ENCODE measurements at regions of chr1 and their contacts with region 1.

Region 1: DNA sequence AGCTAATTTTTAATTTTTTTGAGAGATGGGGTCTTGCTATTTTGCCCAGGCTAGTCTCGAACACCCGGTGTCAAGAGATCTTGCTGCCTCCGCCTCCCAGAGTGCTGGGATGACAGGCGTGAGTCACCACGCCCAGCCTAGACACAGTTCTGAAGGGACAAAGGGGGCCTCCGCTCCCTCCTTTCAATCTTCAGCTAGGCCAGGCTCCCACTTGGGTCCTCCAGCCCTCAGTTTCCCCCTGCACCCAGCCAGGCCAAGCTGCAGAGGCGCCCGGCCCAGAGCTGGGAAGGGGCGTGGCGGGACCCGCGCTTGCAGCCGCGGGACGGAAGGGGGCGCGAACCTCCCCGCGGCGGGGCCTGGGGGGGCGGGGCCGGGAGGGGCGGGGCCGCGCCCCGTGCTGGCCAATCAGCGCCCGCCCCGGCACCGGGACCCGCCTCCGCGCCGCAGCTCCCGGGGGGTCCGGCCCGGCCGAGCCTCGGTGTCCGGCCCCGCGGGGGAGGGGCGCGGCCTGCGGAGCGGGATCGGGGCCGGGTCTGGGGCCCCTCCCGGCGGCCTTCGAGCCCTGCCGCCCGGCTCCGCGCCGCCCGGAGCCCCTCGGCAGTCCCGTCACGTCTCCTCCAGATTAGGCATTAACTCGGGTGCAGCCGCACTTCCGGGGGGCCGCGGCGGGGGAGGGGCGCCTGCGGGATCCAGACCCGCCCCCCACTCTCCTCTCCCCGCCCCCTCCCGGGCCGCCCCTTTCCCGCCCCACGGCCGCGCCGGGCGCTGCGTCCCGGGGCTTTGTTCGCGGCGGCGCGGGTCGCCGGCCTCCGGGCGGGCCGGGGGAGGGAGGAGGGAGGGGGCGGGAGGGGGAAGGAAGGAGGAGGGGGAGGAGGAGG is 559 bp upstream of the AGRN start:
- DNase-seq: peak; percentile 90 to 93
- H3K4me3 ChIP-seq: peak overlapping the region; percentile 16
- H3K4me3 Mint-ChIP-seq: no peak overlapping the region
- H3K27ac Mint-ChIP-seq: no peak overlapping the region
- H3K4me1 ChIP-seq: peaks cover 35% of the 10 kb centered on the region
- H3K4me1 Mint-ChIP-seq: peaks cover 13% of the 10 kb centered on the region
- H3K27me3 ChIP-seq: no peaks in the 10 kb centered on the region
- H3K27me3 Mint-ChIP-seq: no peaks in the 10 kb centered on the region
- CTCF ChIP-seq: peak; percentile 14 to 32

Region 2: DNA sequence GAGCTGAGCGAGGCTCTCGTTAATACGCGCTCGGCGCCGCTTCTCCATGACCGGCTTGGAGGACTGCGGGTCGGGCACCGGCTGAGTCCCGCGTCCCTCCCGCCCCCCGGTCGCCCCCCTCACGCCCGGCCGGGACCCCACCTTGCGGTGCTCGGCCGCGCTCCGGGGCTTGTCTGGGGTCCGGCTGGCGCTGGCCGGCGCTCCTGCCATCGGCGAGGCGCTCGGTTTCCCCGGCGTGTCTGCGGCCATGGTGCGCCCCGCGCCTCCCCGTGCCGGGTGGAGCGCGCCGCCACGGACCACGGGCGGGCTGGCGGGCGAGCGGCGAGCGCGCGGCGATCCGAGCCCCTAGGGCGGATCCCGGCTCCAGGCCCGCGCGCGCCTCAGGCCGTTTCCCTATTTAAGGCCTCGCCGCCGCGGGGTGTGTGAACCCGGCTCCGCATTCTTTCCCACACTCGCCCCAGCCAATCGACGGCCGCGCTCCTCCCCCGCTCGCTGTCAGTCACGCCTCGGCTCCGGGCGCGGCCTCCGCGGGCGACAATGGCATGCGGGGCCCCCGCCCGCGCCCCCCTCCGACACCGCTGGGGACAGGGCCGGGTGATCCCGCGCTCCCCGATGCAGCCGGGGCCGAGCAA is 19.5 kb before region 1 on chr1 and contains the start of gene HES4:
- CTCF ChIA-PET with region 1: interaction called, 6 read pairs
- POLR2A ChIA-PET with region 1: interaction called, 16 read pairs
- intact Hi-C with region 1: loop called (anchors 2 kb)
- DNase-seq: peak; percentile 95
- H3K4me3 ChIP-seq: peak within 1 kb of the TSS; percentile 87
- H3K4me3 Mint-ChIP-seq: peak within 1 kb of the TSS; percentile 79
- H3K27ac Mint-ChIP-seq: peak within 1 kb of the TSS; percentile 96
- H3K4me1 ChIP-seq: peaks cover 40% of the 10 kb centered on the region
- H3K4me1 Mint-ChIP-seq: peaks cover 5% of the 10 kb centered on the region
- H3K27me3 ChIP-seq: no peaks in the 10 kb centered on the region
- H3K27me3 Mint-ChIP-seq: no peaks in the 10 kb centered on the region
- CTCF ChIP-seq: no peak
- total RNA-seq, gene HES4: 45.5 and 53.8 TPM in 2 replicates

Region 3: GRCh38 chr1:1006305-1007159 is 12.8 kb before region 1 on chr1:
- CTCF ChIA-PET with region 1: interaction called, 10 read pairs
- POLR2A ChIA-PET with region 1: interaction called, 16 read pairs
- intact Hi-C with region 1: loop called (anchors 2 kb)
- DNase-seq: peak; percentile 90 to 95
- H3K4me3 ChIP-seq: peak overlapping the region; percentile 26
- H3K4me3 Mint-ChIP-seq: peak overlapping the region; percentile 61
- H3K27ac Mint-ChIP-seq: peak overlapping the region; percentile 99
- H3K4me1 ChIP-seq: peaks cover 47% of the 10 kb centered on the region
- H3K4me1 Mint-ChIP-seq: peaks cover 21% of the 10 kb centered on the region
- H3K27me3 ChIP-seq: no peaks in the 10 kb centered on the region
- H3K27me3 Mint-ChIP-seq: no peaks in the 10 kb centered on the region
- CTCF ChIP-seq: no peak

Region 4: DNA sequence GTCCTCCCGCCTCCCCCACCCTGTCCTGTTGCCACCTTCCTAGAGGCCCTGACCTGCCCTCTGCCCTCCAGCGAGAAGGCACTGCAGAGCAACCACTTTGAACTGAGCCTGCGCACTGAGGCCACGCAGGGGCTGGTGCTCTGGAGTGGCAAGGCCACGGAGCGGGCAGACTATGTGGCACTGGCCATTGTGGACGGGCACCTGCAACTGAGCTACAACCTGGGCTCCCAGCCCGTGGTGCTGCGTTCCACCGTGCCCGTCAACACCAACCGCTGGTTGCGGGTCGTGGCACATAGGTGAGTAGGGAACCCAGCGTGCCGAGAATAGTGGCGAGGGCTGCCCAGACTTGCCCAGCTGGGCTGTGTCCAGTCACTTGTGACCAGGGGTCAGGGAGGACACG is 34.3 kb after region 1 on chr1:
- CTCF ChIA-PET with region 1: no interaction called
- POLR2A ChIA-PET with region 1: interaction called, 4 read pairs
- intact Hi-C with region 1: loop called (anchors 1 kb)
- DNase-seq: no peak
- H3K4me3 ChIP-seq: no peak overlapping the region
- H3K4me3 Mint-ChIP-seq: no peak overlapping the region
- H3K27ac Mint-ChIP-seq: no peak overlapping the region
- H3K4me1 ChIP-seq: peaks cover 10% of the 10 kb centered on the region
- H3K4me1 Mint-ChIP-seq: peaks cover 7% of the 10 kb centered on the region
- H3K27me3 ChIP-seq: no peaks in the 10 kb centered on the region
- H3K27me3 Mint-ChIP-seq: no peaks in the 10 kb centered on the region
- CTCF ChIP-seq: no peak

Region 5: DNA sequence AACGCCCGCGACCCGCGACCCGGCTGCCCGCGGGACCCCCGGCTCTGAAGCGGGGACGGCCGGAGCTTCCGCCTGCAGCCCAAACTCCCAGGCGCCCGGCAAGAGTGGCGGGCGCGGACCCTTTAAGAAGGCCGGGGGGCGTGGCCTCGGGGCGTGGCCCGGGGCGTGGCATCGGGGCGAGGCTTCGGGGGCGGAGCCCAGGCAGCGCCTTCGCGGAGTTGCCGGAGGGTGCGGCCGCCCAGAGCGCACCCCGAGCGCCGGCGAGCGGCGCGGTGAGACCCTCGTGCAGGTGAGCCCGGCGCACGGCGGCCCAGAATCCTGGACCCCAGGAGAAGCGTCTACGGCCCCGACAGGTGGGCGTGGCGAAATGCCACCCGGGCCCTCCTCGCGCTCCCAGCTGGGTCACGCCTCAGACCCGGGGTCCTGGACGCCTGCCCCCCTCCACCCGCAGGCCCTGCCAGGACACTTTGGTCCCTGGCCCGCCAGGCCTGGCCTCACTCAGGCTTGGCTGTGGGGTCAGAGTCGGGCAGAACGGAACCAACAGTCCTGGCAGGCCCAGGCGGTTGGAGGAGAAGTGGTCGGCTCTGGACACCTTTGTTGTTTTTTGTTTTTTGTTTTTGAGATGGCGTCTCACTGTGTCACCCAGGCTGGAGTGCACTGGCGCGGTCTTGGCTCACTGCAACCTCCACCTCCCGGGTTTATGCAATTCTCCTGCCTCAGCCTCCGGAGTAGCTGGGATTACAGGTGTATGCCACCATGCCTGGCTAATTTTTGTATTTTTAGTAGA is 40.3 kb after region 1 on chr1:
- CTCF ChIA-PET with region 1: interaction called, 3 read pairs
- POLR2A ChIA-PET with region 1: interaction called, 4 read pairs
- intact Hi-C with region 1: loop called (anchors 1 kb)
- DNase-seq: peak; percentile 86 to 92
- H3K4me3 ChIP-seq: peak overlapping the region; percentile 64
- H3K4me3 Mint-ChIP-seq: peak overlapping the region; percentile 80
- H3K27ac Mint-ChIP-seq: no peak overlapping the region
- H3K4me1 ChIP-seq: peaks cover 31% of the 10 kb centered on the region
- H3K4me1 Mint-ChIP-seq: peaks cover 7% of the 10 kb centered on the region
- H3K27me3 ChIP-seq: no peaks in the 10 kb centered on the region
- H3K27me3 Mint-ChIP-seq: no peaks in the 10 kb centered on the region
- CTCF ChIP-seq: no peak

Region 6: DNA sequence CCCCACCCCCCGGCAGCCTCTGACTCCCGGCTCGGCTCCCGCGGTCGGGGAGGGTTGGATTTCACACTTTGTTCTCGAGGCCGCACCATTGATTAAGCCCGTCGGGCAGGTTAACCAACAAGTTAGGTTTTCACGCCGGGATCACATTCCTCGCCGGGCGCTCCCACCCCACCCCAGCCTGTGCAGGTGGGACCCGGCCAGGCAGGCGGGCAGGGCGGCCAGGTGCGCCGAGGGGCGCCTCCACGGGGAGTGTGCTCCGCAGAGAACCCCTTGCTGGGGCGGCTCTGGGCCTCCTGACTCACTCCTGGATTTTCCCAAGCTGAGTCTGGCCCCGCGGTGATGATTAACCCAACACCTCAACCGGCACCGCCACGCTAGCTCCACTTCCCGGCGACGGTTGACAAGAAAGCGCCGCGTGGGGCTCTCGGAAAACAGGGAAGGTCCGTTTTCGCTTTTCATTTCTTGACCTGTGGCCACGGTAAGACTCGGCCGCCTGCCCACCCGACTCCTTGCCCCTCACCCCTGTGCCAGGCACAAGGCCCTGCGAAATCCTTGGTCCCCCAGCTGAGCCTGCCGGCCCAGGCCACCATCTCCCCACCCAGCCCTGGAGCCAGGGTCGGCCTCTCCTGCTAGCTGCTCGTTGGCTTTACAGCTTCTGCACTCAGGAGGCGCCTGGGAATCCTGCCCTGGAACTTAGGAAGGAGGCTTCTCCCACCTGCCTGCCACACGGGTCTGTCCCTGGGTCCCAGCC is 145.5 kb after region 1 on chr1:
- CTCF ChIA-PET with region 1: no interaction called
- POLR2A ChIA-PET with region 1: no interaction called
- intact Hi-C with region 1: loop called (anchors 5 kb)
- DNase-seq: peak; percentile 61 to 64
- H3K4me3 ChIP-seq: peak overlapping the region; percentile 82
- H3K4me3 Mint-ChIP-seq: peak overlapping the region; percentile 90
- H3K27ac Mint-ChIP-seq: peak overlapping the region; percentile 81
- H3K4me1 ChIP-seq: peaks cover 17% of the 10 kb centered on the region
- H3K4me1 Mint-ChIP-seq: no peaks in the 10 kb centered on the region
- H3K27me3 ChIP-seq: no peaks in the 10 kb centered on the region
- H3K27me3 Mint-ChIP-seq: no peaks in the 10 kb centered on the region
- CTCF ChIP-seq: no peak